OCI-LY7 (cell line): ENCODE measurements at regions of chrX and their contacts with region 1.

Region 1: DNA sequence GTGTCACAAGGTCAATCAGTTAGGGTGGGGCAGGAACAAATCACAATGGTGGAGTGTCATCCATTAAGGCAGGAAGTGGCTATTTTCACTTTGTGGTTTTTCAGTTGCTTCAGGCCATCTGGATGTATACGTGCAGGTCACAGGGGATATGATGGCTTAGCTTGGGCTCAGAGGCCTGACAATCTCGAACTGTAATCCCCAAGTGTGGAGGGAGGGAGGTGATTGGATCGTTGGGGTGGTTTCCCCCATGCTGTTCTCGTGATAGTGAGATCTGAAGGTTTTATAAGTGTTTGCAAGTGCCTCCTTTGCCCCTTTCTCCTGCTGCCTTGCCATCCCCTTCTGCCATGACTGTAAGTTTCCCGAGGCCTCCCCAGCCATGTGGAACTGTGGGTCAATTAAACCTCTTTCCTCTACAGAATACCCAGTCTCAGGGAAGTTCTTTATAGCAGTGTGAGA is 36.7 kb upstream of the STS start:
- DNase-seq: peak; percentile 88
- H3K4me3 ChIP-seq: peak overlapping the region; percentile 58
- H3K27ac ChIP-seq: peak overlapping the region; percentile 100
- H3K4me1 ChIP-seq: peaks cover 93% of the 10 kb centered on the region
- CTCF ChIP-seq: no peak

Region 2: DNA sequence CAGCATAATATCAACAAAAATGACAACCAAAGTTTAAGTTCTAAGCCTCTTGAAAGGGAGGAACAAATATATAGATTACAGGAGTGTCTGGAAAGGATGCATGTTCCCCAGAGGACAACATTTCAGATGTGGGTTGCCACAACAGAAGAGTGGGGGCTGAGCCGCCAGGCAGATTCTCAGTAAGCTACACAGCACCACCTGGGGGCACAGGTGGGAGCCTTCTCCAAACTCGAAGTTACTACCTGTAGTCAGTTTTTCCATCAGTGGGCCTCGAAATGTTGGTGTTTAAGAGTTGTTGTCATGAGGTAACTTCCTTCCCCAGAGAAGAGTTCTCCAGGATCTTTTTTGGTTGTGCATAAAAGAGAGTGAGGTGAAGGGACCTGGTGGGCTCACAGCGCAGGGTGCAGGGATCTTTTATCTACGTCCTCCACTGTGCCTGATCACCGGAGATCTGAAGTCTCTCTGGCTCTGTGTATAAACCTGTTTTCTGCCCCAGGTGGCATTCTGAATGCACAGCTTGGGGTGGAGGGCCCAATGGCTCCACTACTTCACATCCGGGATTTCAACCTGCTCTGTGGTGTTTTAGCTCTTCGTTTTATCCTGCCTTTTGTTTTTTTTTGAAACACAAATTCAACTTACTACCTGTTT is 21.8 kb before region 1 on chrX:
- CTCF ChIA-PET with region 1: interaction called, 4 read pairs
- POLR2A ChIA-PET with region 1: interaction called, 12 read pairs
- intact Hi-C with region 1: loop called (anchors 1 kb)
- DNase-seq: peak; percentile 76
- H3K4me3 ChIP-seq: peak overlapping the region; percentile 23
- H3K27ac ChIP-seq: peak overlapping the region; percentile 90
- H3K4me1 ChIP-seq: peaks cover 100% of the 10 kb centered on the region
- CTCF ChIP-seq: peak; percentile 72

Region 3: DNA sequence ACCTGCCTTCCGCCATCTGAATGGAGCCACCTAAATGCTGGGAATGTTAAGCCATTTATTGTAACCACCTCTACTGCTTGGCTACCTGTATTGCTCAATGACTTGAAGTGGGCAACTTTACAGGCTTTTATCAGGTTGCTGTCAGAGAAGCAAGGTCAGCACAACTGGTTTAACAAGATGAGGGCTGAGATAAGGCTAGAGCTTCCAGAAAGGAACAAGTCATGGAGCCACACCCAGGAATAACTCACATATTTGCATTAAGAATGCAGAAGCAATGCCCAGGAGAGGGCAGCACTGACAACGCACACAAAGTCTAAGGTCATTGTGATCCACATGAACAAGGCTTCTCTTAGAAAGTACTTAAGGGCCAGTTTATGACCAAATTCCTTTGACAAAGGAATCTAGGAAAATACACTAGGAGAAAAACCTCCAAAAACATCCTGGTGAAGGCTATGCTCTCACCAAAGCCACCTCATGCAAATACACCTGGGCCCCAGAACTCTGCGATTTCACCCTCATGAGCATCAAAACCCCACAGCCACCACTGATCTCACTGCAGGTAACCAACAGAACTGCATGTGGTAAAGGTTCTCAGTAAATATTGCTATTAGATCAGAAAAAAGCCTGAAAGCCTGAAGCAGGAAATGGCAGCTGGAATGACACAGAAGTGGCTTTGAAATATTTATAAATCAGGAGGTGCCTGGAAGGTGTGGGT is 21.6 kb after region 1 on chrX:
- CTCF ChIA-PET with region 1: interaction called, 3 read pairs
- POLR2A ChIA-PET with region 1: interaction called, 25 read pairs
- intact Hi-C with region 1: no loop called
- DNase-seq: peak; percentile 69
- H3K4me3 ChIP-seq: peak overlapping the region; percentile 50
- H3K27ac ChIP-seq: peak overlapping the region; percentile 84
- H3K4me1 ChIP-seq: peaks cover 50% of the 10 kb centered on the region
- CTCF ChIP-seq: peak; percentile 77

Region 4: DNA sequence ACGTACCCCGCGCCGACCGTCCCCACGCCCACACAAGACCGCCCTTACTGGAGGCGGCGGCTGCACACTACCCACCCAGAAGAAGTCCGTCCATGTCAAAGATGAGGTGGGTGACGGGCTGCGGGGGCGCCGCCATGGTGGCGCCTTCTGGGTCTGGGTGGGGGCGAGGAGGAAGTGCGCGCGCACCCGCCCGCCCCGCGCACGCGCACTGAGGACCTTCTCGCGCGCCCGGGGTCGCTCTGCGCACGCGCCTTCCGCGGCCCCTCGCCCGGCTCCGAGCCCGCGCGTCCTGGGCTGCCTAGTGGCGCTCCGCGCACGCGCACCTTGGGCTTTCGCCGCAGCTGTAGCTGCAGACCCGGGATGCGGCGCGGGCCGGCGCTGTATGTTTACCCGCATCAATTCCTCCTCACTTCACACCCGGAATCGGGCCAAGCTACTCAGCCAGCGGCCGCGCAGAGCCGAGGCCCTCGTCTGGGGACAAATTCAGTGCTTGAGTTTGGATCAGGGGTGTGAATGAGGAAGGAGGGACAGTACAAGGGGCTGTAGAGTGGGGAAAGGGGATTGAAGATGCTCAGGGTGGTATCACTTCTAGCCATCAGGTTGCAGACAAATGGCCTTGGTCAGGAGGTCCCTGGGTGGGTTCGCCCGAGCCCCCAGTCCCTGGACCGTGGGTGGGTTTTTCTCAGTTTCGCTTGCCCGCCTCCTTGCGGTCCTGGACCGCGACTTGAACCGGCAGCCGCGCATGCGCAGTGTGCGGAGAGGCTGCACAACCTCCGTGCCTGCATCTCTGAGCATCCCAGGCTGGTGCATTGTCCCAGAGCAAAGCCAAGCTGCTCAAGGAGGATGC is 37.4 kb after region 1 on chrX and contains the start of gene PUDP:
- CTCF ChIA-PET with region 1: no interaction called
- POLR2A ChIA-PET with region 1: interaction called, 12 read pairs
- intact Hi-C with region 1: loop called (anchors 2 kb)
- DNase-seq: peak; percentile 87
- H3K4me3 ChIP-seq: peak within 1 kb of the TSS; percentile 95
- H3K27ac ChIP-seq: peak within 1 kb of the TSS; percentile 87
- H3K4me1 ChIP-seq: peaks cover 33% of the 10 kb centered on the region
- CTCF ChIP-seq: peak; percentile 41
- total RNA-seq, gene PUDP: 8.8 and 21.1 TPM in 2 replicates

Region 5: GRCh38 chrX:7170903-7171302 is 60.1 kb after region 1 on chrX:
- CTCF ChIA-PET with region 1: no interaction called
- POLR2A ChIA-PET with region 1: no interaction called
- intact Hi-C with region 1: no loop called
- DNase-seq: peak; percentile 9
- H3K4me3 ChIP-seq: no peak overlapping the region
- H3K27ac ChIP-seq: no peak overlapping the region
- H3K4me1 ChIP-seq: no peaks in the 10 kb centered on the region
- CTCF ChIP-seq: peak; percentile 71

Region 6: GRCh38 chrX:7219184-7219601 is 108.3 kb after region 1 on chrX:
- CTCF ChIA-PET with region 1: no interaction called
- POLR2A ChIA-PET with region 1: interaction called, 12 read pairs
- intact Hi-C with region 1: loop called (anchors 2 kb)
- DNase-seq: peak; percentile 56
- H3K4me3 ChIP-seq: peak overlapping the region; percentile 85
- H3K27ac ChIP-seq: peak overlapping the region; percentile 90
- H3K4me1 ChIP-seq: peaks cover 56% of the 10 kb centered on the region
- CTCF ChIP-seq: no peak